AG04450 (cell line): ENCODE measurements at regions of chr1 and their contacts with region 1.

Region 1: GRCh38 chr1:9588551-9589143 is at the start of gene TMEM201:
- DNase-seq: peak; percentile 55
- H3K4me3 ChIP-seq: peak within 1 kb of the TSS; percentile 69
- H3K27ac ChIP-seq: peak within 1 kb of the TSS; percentile 39
- H3K27me3 ChIP-seq: no peaks in the 10 kb centered on the region
- CTCF ChIP-seq: peak; percentile 52
- polyA plus RNA-seq, gene TMEM201: 1.6 and 2.0 TPM in 2 replicates

Region 2: DNA sequence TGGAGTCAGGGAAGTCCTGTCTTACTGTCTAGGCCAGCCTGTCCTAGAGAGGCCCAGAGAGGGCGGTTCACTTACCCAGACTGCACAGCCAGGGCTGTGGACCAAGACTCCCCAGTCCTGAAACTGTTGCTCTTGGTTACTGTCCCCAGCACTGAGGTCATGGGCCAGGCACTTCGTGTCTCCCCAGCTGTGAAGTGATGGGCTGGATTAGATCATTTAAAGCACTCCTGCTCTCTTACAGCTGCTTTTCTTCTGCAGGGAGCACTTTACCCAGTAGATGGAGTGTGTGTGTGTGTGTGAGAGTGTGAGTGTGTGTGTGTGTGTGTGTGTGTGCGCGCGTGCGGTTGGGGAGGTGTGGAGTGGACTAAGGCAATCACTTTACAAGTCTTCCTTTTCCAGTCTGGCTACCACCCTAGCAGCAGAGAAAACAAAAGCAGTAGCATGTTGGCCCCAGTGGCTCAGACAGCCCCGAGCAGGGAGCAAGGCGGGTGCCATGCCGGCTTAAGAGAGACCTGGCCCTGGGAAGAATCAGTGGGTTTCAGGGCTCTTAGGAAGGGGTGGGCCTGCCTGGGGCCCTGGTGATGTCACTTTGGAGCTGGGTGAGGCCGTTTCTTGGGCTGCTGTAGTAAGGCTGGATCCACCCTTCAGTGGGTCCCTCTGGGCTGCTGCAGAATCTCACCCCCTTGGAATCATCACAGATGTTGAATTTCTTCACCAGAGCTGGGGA is 293.6 kb before region 1 on chr1:
- CTCF ChIA-PET with region 1: no interaction called
- POLR2A ChIA-PET with region 1: no interaction called
- DNase-seq: no peak
- H3K4me3 ChIP-seq: peak overlapping the region; percentile 99
- H3K27ac ChIP-seq: peak overlapping the region; percentile 91
- H3K27me3 ChIP-seq: no peaks in the 10 kb centered on the region
- CTCF ChIP-seq: peak; percentile 30

Region 3: GRCh38 chr1:9486466-9487140 is 102.0 kb before region 1 on chr1:
- CTCF ChIA-PET with region 1: no interaction called
- POLR2A ChIA-PET with region 1: no interaction called
- DNase-seq: no peak
- H3K4me3 ChIP-seq: no peak overlapping the region
- H3K27ac ChIP-seq: no peak overlapping the region
- H3K27me3 ChIP-seq: peaks cover 8% of the 10 kb centered on the region
- CTCF ChIP-seq: no peak

Region 4: GRCh38 chr1:9746211-9746610 is 157.6 kb after region 1 on chr1:
- CTCF ChIA-PET with region 1: no interaction called
- POLR2A ChIA-PET with region 1: no interaction called
- DNase-seq: no peak
- H3K4me3 ChIP-seq: no peak overlapping the region
- H3K27ac ChIP-seq: no peak overlapping the region
- H3K27me3 ChIP-seq: no peaks in the 10 kb centered on the region
- CTCF ChIP-seq: no peak

Region 5: DNA sequence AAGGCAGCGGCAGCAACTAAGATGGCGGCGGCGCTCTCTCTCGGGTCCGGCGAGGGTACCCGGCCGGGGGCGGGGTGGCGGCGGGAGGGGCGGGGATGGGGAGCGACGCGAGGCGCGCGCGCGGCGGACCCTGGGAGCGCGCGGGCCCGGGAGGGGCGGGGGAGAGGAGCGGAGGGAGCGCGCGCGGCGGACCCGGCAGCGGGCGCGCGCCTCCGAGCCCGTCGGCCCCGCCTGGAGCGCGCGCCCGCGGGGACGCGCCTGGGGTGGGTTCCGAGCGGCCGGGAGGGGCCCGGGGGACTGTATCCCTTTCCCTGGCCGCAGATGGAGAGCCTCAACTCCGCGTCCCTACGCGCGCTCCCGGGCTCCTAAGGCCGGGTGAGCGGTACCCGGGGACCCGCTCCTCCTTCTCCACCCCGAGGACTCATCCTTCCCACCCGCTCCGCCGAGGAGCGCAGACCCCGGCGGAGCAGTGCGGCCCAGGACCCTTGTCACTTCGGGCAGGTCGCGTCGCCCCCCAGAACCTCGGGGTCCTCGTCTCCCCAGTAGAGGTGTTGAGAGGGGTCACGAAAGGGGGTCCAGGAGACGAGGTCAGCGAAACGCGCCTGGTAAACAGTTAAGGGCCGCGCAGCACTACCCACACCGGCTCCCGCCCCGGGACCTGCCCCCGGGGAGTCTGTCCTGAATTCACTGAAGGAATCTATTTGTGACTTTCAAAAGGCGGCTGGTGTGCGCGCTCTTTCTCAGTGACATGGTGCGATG is 235.5 kb after region 1 on chr1 and contains the start of gene CLSTN1:
- CTCF ChIA-PET with region 1: interaction called, 10 read pairs
- POLR2A ChIA-PET with region 1: no interaction called
- DNase-seq: peak; percentile 42
- H3K4me3 ChIP-seq: peak within 1 kb of the TSS; percentile 97
- H3K27ac ChIP-seq: peak within 1 kb of the TSS; percentile 31
- H3K27me3 ChIP-seq: no peaks in the 10 kb centered on the region
- CTCF ChIP-seq: no peak
- polyA plus RNA-seq, gene CLSTN1: 35.2 and 57.8 TPM in 2 replicates